ENCODE measurements at regions of chr12 and their contacts with region 1.

Region 1: GRCh38 chr12:85468356-85469157 is 188.5 kb downstream of the ALX1 start:
- DNase-seq: peak; percentile 62
- H3K27ac ChIP-seq: no peak overlapping the region
- CTCF ChIP-seq: peak; percentile 84

Region 2: DNA sequence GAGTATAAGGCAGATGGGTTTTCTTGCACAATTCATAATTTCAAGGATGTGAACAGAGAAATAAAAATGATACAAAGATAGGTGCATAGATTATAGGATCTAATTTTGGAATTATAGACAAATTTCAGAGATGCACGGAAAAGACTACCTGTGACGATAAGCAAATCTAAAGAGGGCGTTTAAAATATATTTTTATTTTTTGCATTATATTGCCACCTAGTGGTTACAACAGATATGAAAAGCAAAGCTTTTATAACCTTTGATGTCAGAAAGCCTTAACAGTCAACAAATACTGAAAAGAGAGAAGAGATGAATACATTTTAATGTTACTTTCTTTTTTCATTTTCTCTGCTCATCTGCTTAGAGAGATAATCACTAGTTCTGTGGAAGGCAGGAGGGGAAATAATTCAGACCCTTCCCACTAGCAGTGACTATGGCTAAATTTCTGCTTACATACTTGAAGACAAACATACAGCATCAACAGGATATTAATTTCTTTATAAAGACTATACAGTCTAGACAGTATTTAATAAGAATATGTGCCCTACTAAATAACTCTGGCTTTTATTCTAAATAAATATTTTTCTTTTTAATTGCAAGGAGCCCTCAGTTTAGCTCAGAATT is 451.9 kb after region 1 on chr12:
- CTCF ChIA-PET with region 1: interaction called, 11 read pairs
- POLR2A ChIA-PET with region 1: no interaction called
- DNase-seq: peak; percentile 4
- H3K27ac ChIP-seq: no peak overlapping the region
- CTCF ChIP-seq: peak; percentile 65

Measured in RWPE1 (cell line).